MCF 10A (cell line): ENCODE measurements at regions of chr16 and their contacts with region 1.

Region 1: GRCh38 chr16:68756250-68756915 is 19.3 kb downstream of the CDH1 start:
- DNase-seq: peak; percentile 97
- H3K4me3 Mint-ChIP-seq: peak overlapping the region; percentile 47
- H3K27ac Mint-ChIP-seq: peak overlapping the region; percentile 96
- H3K4me1 Mint-ChIP-seq: peaks cover 44% of the 10 kb centered on the region
- H3K27me3 Mint-ChIP-seq: no peaks in the 10 kb centered on the region
- CTCF ChIP-seq: no peak

Region 2: DNA sequence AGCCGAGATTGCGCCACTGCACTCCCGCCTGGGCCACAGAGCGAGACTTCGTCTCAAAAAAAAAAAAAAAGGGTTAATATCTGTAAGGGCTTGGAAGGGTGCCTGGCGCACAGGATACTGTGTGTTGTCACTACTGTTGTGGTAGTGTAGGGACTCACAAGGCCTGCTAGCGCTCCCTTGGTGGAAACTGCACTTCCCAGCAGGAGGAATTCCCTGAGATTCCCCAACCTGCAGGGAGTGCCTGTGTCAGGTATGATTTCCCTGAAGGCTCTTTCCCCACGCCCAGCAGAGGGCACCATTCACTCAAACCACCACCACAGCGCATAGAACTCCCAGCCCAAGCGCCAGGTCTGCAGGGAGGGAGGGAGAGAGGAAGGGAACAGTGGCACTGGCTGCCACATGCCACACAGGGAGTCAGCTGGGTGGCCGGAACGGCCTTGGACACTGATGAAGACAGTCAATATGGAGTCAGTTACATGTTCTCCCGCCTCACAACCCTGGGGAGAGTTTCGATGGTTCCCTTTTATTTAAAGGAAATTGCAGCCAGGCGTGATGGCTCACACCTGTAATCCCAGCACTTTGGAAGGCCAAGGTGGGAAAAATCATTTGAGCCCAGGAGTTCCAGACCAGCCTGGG is 52.0 kb before region 1 on chr16:
- CTCF ChIA-PET with region 1: interaction called, 8 read pairs
- POLR2A ChIA-PET with region 1: interaction called, 18 read pairs
- intact Hi-C with region 1: loop called (anchors 1 kb)
- DNase-seq: peak; percentile 92
- H3K4me3 Mint-ChIP-seq: no peak overlapping the region
- H3K27ac Mint-ChIP-seq: no peak overlapping the region
- H3K4me1 Mint-ChIP-seq: peaks cover 20% of the 10 kb centered on the region
- H3K27me3 Mint-ChIP-seq: no peaks in the 10 kb centered on the region
- CTCF ChIP-seq: peak; percentile 81

Region 3: GRCh38 chr16:68744369-68745280 is 11.8 kb before region 1 on chr16:
- CTCF ChIA-PET with region 1: interaction called, 5 read pairs
- POLR2A ChIA-PET with region 1: interaction called, 40 read pairs
- intact Hi-C with region 1: no loop called
- DNase-seq: peak; percentile 64
- H3K4me3 Mint-ChIP-seq: no peak overlapping the region
- H3K27ac Mint-ChIP-seq: peak overlapping the region; percentile 44
- H3K4me1 Mint-ChIP-seq: peaks cover 25% of the 10 kb centered on the region
- H3K27me3 Mint-ChIP-seq: no peaks in the 10 kb centered on the region
- CTCF ChIP-seq: no peak

Region 4: DNA sequence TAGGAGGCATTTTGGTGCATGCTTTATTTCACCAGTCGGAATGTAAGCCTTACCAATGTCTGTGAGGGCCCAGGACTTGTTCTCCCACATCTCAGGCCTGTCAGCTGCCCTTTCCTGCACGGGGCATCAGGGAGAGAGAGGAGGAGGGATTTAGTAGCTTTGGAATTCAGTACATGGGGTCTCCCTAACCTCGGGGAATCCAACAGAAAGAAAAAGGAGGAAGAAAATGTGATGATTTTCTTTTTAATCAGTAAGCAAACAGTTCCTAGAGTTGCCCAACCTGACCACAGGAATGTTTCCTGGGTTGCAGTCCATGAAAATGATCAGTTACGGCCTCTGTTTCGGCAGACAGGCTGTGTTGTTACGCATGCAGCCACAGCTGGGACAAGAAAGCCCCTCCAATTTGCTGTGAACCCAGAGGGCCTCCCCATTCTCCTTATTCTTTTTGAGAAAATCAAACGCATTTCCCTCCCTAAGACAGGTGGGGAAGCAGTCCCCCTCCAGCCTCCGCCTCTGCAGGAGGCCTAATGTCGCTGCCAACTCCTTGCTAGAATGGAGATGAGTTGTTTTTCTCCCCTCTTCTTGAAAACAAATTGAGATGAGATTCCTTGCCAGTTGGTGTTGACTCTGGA is 33.9 kb after region 1 on chr16:
- CTCF ChIA-PET with region 1: no interaction called
- POLR2A ChIA-PET with region 1: interaction called, 15 read pairs
- intact Hi-C with region 1: no loop called
- DNase-seq: peak; percentile 78
- H3K4me3 Mint-ChIP-seq: no peak overlapping the region
- H3K27ac Mint-ChIP-seq: peak overlapping the region; percentile 65
- H3K4me1 Mint-ChIP-seq: peaks cover 16% of the 10 kb centered on the region
- H3K27me3 Mint-ChIP-seq: no peaks in the 10 kb centered on the region
- CTCF ChIP-seq: no peak